ENCODE measurements at regions of chr2 and their contacts with region 1.

Region 1: DNA sequence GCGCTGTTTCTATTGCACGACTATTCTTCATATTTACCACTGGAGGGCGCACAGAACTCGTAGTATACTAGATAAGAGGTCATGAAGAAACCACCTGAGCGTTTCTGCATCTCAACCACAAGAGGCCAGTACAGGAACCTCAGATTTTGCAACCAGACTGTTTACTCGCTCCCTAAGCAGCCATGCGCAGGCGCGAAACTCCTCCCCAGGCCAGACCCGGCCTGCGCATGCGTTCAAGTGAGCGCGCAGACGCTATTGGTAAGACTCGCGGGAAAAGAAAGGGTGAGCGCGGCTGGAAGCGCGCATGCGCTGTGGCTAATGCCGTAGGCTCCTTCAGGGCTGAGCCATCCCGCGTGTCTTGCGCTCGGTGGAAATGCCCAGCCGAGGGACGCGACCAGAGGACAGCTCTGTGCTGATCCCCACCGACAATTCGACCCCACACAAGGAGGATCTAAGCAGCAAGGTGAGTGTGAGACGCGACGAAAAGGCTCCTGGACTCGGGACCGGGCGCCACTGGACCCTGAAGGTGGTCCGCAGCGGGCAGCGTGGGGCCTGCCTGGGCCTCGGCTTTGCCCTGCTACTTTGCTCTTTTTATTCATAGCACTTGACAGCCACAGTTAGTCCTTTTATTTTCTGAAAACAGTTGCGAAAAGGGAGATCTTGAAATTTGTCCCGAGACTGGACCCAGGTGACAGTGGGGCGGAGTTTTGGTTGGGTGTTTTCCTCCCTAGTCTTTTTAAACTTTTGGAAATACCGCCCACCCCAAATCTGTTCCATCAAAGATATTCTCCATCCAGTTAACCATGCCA is at the start of gene ASNSD1:
- DNase-seq: peak; percentile 99
- ATAC-seq: peak; percentile 89
- H3K4me3 ChIP-seq: peak within 1 kb of the TSS; percentile 90
- H3K27ac ChIP-seq: no peak within 1 kb of the TSS; the same call in 1 of the 2 replicates
- H3K4me1 ChIP-seq: peaks cover 30% of the 10 kb centered on the region
- H3K27me3 ChIP-seq: no peaks in the 10 kb centered on the region
- CTCF ChIP-seq: peak; percentile 98
- total RNA-seq, gene ASNSD1: 33.7 and 48.3 TPM in 2 replicates

Region 2: DNA sequence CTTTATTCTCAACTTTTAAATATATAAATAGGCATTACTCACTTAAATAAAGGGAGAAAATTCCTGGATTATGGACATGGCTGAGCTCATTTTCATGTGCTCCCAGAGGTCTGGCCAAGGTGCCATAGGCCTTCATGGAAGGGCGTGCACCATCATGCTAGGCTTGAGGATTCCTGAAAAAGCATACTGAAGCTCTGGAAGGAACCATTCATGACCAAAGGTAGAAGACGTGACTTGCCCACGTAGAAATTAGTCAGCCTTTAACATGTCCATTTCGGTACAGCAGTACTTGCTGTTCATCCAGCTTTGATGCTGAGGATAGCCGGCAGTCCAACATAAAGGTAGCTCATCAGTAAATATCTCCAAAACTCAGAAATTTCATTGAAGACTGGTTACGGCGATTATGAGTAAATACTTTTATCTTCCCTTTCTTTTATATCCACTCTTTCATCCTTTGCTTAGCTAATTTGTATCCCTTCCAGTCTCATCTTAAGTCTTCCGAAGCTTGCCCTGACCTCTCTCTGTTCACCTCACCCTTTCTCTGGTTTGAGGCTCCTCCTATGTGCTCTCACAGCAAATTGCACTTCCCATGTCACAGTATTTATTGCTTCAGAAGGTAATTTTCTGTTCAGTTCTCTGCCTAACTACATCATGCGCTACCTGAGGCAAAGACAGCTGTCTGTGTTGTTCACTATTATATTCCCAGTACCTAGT is 32.4 kb before region 1 on chr2:
- CTCF ChIA-PET with region 1: no interaction called
- POLR2A ChIA-PET with region 1: no interaction called
- intact Hi-C with region 1: no loop called
- DNase-seq: no peak
- ATAC-seq: no peak
- H3K4me3 ChIP-seq: no peak overlapping the region
- H3K27ac ChIP-seq: no peak overlapping the region
- H3K4me1 ChIP-seq: peaks cover 14% of the 10 kb centered on the region
- H3K27me3 ChIP-seq: no peaks in the 10 kb centered on the region
- CTCF ChIP-seq: no peak; the same call in 1 of the 2 replicates

Region 3: DNA sequence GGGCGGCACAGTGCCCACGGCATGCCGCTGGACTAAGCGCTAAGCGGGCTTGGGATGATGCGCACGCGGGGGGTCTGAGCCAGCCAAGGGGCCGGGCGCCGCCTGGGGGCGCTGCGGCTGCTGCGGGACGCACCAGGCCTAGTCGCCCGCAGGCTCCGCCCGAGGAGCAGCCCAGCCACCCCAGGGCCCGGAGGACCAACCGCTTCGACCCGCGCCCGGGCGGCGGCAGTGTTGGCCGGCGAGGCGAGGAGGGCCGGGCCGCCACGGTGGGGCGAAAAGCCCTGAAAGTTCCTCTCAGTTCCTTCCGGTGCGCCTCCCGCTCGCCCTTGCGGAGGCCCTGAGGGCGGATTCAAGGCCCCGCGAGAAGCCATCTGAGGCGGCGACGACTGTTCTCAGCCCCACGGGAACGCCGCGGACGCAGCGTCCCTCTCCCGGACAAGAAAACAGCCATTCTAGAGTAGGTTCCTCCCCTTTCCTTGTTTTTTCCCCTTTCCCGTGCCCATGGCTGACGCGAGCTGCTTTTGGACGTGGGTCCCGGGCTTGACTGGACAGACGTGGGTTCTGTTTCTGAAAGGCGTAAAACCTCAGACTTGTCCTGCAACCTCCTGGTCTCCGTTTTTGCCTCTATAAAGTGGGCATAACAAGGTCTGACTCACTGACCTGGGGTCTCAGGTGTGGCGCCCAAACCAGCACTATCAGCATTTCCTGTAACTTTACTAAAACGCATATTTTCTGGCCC is 13.2 kb after region 1 on chr2 and contains the start of gene ANKAR:
- CTCF ChIA-PET with region 1: interaction called, 4 read pairs
- POLR2A ChIA-PET with region 1: no interaction called
- intact Hi-C with region 1: loop called (anchors 1 kb)
- DNase-seq: peak; percentile 87
- ATAC-seq: peak; percentile 94
- H3K4me3 ChIP-seq: peak within 1 kb of the TSS; percentile 73
- H3K27ac ChIP-seq: peak within 1 kb of the TSS; percentile 50
- H3K4me1 ChIP-seq: peaks cover 12% of the 10 kb centered on the region; the same call in 1 of the 2 replicates
- H3K27me3 ChIP-seq: no peaks in the 10 kb centered on the region
- CTCF ChIP-seq: peak; percentile 85
- total RNA-seq, gene ANKAR: 3.5 and 6.6 TPM in 2 replicates

Region 4: DNA sequence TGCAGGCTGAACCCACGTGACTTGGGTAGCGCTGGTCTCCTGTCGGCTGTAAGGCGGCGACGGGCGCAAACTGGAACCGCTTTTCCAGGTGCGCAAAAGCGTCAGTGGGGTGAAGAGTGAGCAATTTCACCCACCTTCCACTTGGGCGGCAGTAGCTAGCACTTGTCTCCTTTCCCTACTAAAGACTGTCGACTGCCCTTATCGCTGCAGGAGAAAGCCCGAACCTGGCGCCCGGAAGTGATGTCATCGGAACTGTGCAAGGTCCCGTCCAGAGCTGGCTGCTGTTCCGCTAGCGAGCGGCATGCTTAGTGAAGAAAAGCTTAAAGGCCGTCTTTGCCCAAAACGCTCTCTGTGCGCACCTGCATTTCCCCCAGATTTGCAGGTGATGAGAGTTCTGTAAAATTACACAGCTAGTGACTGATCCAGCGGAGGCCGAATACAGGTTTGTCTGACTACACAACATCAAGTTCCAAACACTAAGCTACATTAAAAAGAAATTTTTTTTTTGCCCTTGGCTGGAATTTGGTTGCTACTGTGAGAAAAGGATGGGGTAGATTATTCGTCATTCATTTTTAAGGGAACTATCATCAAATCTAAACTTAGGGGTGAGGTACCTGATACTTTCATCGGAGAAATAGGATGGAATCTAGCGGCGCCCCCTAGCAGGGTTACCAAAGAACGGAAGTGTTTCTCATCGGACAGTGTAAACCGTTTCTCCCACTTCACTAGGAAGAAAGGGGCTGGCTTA is 101.4 kb after region 1 on chr2 and contains the start of gene OSGEPL1:
- CTCF ChIA-PET with region 1: interaction called, 11 read pairs
- POLR2A ChIA-PET with region 1: no interaction called
- intact Hi-C with region 1: loop called (anchors 1 kb)
- DNase-seq: peak; percentile 91
- ATAC-seq: peak; percentile 94
- H3K4me3 ChIP-seq: peak within 1 kb of the TSS; percentile 95
- H3K27ac ChIP-seq: peak within 1 kb of the TSS; percentile 74
- H3K4me1 ChIP-seq: peaks cover 15% of the 10 kb centered on the region
- H3K27me3 ChIP-seq: no peaks in the 10 kb centered on the region
- CTCF ChIP-seq: peak; percentile 79
- total RNA-seq, gene OSGEPL1: 8.1 and 12.6 TPM in 2 replicates

Region 5: DNA sequence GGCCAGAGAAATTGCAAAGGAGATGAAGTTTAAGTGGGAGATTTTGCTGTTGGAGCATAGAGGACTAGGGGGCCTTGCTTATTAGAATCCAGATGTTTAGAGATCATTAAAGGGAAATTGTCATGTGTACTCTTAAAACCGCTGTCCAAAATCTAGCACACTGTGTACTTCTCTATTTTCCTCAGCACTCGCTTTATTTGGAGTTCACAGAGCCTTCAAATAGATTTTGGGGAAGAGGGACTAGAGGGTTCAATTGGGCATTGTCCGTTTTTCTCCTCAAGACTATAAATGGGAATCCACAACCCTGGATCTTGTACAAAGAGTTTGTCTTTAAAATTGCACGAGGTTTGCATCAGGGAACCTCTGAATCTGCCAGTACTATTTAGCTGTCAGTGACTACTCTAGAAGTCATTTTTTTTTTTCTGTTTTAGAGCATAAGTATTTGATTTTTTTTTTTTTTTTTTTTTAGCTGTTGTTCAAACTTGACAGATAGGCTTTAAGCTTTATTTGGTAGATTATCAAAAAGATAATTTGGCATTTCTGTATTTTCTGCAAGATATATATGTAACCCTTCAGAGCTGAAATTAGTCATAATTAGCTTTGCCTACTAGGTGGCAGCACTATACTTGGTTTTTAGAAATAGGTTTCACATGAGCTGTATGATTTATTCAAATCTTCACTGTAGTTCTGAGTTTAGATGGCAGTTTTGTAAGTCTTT is 137.1 kb after region 1 on chr2:
- CTCF ChIA-PET with region 1: interaction called, 10 read pairs
- POLR2A ChIA-PET with region 1: no interaction called
- intact Hi-C with region 1: no loop called
- DNase-seq: peak; percentile 62
- ATAC-seq: peak; percentile 80
- H3K4me3 ChIP-seq: no peak overlapping the region
- H3K27ac ChIP-seq: no peak overlapping the region
- H3K4me1 ChIP-seq: peaks cover 9% of the 10 kb centered on the region
- H3K27me3 ChIP-seq: no peaks in the 10 kb centered on the region
- CTCF ChIP-seq: peak; percentile 74

Measured in PC-3 (cell line).